ENCODE measurements at regions of chr6 and their contacts with region 1.

Region 1: DNA sequence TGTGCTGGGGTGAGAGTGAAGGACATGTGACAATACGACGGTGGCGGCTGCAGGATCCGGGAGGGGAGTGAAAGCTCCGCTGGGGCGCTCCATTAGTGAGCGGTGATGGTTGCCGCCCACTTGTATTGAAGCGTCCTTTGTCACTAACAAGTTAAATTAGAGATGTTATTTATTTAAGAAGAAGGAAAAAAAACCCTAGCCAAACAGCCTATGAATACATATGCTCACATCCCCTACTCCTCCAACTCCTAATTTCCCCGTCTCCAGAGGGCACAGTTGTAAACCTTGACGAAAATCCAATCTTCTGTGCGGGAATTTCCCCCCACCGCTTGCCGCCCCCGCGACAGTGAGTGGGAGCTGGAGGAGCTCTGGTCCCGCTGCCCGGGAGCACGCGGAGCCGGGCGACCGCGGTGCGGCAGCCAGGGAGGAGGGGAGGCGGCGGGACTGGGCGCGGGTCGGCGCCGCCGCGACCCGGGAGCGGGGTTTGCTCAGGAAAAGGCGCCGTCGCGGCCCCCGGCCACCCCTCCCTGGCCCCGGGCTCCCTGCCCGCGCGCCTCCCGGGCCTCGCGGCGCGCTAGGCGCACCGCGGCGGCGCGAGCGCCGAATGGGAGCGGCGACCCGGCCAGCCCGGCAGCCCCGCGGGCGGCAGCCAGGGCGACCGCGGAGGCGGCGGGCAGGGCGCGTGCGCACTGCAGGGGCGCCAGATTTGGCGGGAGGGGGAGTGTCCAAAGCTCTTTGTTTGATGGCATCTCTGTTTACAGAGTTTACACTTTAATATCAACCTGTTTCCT is at the start of gene MYB:
- DNase-seq: peak in 3 of 10 donors; percentile 14 to 64 (median 30)
- H3K4me3 ChIP-seq: peak within 1 kb of the TSS; percentile 45 to 75 (median 62)
- H3K27ac ChIP-seq: peak within 1 kb of the TSS in 1 of 59 donors; percentile 28
- H3K27me3 ChIP-seq: peaks cover 0 to 38% (median 25%) of the 10 kb centered on the region in 45 donors
- CTCF ChIP-seq: peak in 1 of 56 donors; percentile 20
- total RNA-seq, gene MYB: 0.15 to 2.1 (median 0.46) TPM in 86 of 120 experiments, not detected in the others

Region 2: GRCh38 chr6:135054569-135055498 is 125.9 kb before region 1 on chr6 and contains the start of gene HBS1L:
- intact Hi-C with region 1: loop called in 1 of 2 experiments (anchors 10 kb)
- DNase-seq: peak; percentile 91 to 97 (median 96)
- H3K4me3 ChIP-seq: peak within 1 kb of the TSS; percentile 58 to 100 (median 92)
- H3K27ac ChIP-seq: peak within 1 kb of the TSS; percentile 30 to 94 (median 82)
- H3K27me3 ChIP-seq: no peaks in the 10 kb centered on the region
- CTCF ChIP-seq: peak in 38 of 56 donors; percentile 3 to 63 (median 35)
- total RNA-seq, gene HBS1L: 67.2 to 187 (median 115) TPM

Region 3: DNA sequence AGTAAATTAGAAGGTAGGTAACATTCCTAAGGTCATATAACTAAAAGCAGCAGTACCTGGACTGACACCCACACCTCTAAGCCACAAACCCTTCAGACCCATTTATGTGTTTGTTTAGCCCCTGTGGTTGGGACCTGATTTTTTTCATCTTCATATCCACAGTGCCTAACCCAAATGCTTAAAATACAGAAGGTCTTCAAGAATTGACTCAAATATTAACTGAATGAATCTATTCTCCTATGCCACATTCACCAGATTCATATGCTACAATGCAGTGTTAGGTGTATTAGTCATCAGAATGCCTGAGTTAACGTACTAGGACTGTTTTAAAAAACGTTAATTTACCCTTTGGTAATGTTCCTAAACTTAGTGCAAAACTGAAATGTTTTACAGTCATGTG is 192.0 kb after region 1 on chr6:
- intact Hi-C with region 1: no loop called
- DNase-seq: no peak
- H3K4me3 ChIP-seq: no peak overlapping the region
- H3K27ac ChIP-seq: no peak overlapping the region
- H3K27me3 ChIP-seq: no peaks in the 10 kb centered on the region
- CTCF ChIP-seq: no peak

Measured in dorsolateral prefrontal cortex (tissue), 120 donors.